Mammary epithelial cell (primary cell): ENCODE measurements at regions of chr14 and their contacts with region 1.

Region 1: DNA sequence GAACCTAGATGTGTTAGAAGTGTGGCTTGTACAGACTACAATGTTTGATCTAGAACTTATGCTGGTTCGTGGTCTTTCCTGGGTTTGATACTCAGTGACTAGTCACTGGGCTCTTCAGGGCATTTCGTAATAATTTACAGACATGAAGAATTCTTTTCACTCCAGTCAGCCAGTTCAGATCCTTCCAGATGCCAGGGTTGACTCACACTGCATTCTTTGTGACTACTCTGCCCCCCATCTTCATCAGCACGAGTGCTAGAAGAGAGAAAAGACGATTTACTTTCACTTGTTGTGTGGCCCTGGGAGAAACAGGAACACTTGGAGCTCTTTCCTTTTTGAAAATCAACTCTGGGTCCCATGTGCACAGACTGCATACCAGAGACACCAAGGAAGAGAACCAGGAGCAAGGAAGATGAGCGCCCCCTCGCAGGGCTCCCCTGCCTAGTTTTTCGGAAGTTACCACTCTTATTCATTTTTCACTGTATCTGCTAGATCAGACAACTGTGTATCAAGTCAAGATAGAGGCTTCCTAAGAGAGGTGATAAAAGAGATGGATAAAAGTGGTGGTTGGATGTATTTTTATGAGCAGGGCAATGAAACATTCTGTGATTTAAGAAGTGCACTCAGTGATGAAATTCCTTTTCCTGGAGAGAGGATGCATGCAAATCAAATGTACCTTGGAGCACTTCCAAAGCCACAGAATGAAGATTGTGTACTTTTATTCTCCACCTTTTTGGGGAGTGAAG is 33.5 kb upstream of the EVL start:
- DNase-seq: peak; percentile 97
- H3K4me3 ChIP-seq: peak overlapping the region; percentile 51 to 61 (median 55)
- H3K27ac ChIP-seq: peak overlapping the region; percentile 88
- H3K4me1 ChIP-seq: peaks cover 38% of the 10 kb centered on the region
- H3K27me3 ChIP-seq: no peaks in the 10 kb centered on the region
- CTCF ChIP-seq: peak; percentile 7 to 9

Region 2: GRCh38 chr14:100067971-100068959 is 36.6 kb after region 1 on chr14:
- CTCF ChIA-PET with region 1: interaction called, 3 read pairs
- dilution Hi-C with region 1: no loop called
- in situ Hi-C with region 1: no loop called
- intact Hi-C with region 1: loop called (anchors 5 kb)
- DNase-seq: peak; percentile 79
- H3K4me3 ChIP-seq: no peak overlapping the region
- H3K27ac ChIP-seq: peak overlapping the region; percentile 37
- H3K4me1 ChIP-seq: peaks cover 26% of the 10 kb centered on the region
- H3K27me3 ChIP-seq: no peaks in the 10 kb centered on the region
- CTCF ChIP-seq: no peak